ENCODE measurements at regions of chr2 and their contacts with region 1.

Region 1: DNA sequence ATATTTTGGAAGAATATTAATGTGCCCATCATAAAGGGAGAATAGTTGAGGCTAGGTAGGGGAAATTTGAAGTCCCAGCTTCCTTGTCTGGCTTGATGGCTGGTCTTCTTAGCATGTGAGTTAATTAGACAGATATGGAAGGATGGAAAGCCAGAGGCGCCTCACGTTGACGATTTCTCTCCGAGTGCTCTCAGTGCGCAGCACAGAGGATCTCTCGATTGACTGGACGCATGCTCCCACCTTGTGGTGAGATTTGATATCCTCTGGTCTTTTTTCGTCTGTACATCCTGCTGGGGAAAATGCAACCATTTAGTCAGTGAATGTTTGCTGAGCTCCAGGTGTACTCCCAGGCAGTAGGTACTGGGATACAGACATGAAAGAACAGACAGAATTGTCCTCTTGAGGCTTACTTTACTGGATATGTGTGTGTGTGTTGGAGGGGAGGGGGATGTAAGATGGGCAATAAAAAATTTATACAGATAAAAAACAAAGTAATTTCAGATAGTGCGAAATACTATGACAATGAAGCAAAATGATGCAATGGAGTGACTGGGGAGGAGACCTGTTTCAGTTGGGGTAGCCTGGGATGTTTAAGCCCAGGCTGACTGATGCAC is 66.9 kb upstream of the ZNG1B start:
- H3K4me3 Mint-ChIP-seq: no peak overlapping the region
- H3K27ac Mint-ChIP-seq: no peak overlapping the region
- H3K4me1 Mint-ChIP-seq: peaks cover 55% of the 10 kb centered on the region
- H3K27me3 Mint-ChIP-seq: no peaks in the 10 kb centered on the region

Region 2: DNA sequence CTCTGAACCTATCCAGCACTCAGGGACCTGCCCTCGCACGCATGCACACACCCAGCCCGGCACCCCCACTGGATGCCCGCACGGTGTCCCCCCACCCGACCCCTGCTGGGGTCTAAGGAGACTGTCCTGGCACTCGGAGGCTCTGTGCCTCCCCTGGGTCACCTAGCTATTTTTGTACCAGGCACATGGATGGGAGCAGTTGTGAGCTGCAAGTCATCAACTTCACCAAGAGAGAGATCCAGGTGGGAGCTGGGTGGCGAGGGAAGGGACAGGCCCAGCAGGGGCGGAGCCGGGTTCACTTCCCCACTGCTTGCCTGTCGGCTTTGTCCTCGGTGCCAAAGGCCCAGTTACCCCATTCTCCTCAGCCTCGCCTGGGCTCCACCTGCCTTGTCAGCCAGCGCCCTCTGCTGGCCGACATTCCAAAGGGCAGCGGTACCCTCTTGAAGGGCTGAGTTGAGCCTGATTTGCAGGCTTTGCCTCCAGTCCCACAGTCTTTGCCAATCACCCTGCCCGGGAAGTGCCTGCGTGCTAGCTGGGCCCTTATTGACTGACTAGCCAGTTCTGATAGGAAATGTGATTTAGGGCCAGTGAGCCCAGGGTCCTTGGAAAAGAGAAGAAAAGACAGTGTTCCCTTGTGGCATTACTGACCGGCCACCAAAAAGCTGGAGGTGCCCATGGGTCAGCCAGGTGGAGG is 643.9 kb before region 1 on chr2:
- intact Hi-C with region 1: no loop called
- H3K4me3 Mint-ChIP-seq: no peak overlapping the region
- H3K27ac Mint-ChIP-seq: no peak overlapping the region
- H3K4me1 Mint-ChIP-seq: peaks cover 71% of the 10 kb centered on the region
- H3K27me3 Mint-ChIP-seq: no peaks in the 10 kb centered on the region

Region 3: DNA sequence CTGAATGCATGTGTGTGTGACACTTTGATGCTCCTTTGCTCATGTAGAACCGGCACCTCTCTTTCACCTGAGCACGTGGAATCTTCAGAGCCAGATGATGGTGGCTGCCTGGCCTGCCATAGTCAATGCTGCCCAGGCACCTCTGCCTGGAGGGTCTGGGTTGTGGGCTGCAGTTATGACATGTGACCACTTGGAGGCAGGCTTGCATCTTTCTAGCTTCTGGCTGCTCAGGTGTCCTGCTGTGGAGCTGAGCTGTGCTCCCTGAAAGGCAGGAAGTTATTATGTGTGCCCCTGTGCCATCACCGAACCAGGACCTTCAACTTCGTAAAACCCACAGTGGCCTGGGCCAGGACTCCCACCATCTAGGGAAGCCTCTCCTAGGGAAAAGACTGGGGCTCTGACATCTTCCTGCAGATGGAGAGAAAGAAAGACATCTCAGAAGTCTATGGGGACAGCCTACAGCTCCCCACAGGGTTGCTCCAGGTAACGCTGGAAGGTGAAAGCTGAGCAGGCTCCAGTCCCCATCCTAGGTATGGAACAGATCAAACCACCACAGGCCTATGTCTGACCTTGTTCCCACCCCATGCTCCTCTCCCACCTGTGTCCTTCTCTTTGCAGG is 166.6 kb before region 1 on chr2:
- intact Hi-C with region 1: loop called (anchors 5 kb)
- H3K4me3 Mint-ChIP-seq: no peak overlapping the region
- H3K27ac Mint-ChIP-seq: no peak overlapping the region
- H3K4me1 Mint-ChIP-seq: peaks cover 30% of the 10 kb centered on the region
- H3K27me3 Mint-ChIP-seq: peaks cover 2% of the 10 kb centered on the region

Region 4: DNA sequence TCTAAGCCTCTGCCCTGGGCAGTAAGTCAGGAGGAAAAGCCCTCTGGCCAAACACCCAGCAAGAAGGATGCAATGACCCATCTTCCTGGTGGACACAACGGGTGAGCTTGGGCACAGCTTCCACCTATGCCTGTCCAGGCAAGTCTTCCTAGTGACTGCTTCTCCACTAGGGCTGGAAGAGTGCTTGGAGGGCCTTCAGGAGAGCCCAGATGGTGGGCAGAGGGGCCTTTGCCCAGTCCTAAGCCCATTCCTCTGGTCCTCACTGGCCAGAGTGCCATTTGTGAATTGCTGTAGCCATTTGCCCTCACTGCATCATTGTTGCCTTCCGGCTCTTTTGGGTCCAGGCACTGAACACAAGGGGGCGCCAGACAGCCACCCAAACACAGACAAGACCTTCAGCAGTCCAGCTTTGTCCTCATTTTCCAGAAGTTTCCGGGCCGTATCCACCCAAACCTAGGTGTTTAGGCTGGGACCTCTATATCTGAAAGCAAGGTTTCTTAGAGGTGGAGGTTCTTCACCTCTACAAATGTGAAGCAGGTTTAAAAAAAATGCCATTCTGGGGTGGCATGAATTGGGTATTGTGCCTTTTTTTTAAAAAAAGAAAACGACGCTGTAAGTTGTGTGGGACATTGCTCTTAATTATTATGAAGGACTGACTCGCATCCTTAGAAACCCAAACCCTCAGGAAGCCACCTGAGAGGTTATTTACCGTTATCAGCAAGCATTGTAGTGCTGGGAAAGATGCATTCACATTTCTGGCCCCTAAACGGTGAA is 121.4 kb before region 1 on chr2:
- intact Hi-C with region 1: loop called (anchors 2 kb)
- H3K4me3 Mint-ChIP-seq: no peak overlapping the region
- H3K27ac Mint-ChIP-seq: no peak overlapping the region
- H3K4me1 Mint-ChIP-seq: peaks cover 30% of the 10 kb centered on the region
- H3K27me3 Mint-ChIP-seq: no peaks in the 10 kb centered on the region

Region 5: DNA sequence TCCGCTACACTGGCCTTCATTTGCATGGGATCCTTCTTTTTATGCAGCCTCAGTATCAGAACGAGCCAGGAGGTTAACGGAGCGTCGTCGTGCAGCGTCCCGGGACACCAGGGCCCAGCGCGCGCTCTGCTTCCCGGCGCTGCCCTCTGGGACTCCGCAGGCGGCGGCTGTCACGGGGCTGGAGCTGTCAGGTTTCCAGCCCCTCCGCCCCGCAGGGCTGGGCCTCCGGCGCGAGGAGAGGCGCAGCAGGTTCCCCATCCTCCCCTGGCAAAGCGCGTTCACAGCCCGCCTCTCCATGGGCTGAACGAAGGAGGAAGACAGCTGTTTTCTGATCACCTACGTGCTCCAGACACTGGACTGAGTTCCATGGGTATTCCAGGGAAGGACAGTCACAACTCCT is 79.4 kb before region 1 on chr2:
- intact Hi-C with region 1: loop called (anchors 1 kb)
- H3K4me3 Mint-ChIP-seq: no peak overlapping the region
- H3K27ac Mint-ChIP-seq: no peak overlapping the region
- H3K4me1 Mint-ChIP-seq: no peaks in the 10 kb centered on the region
- H3K27me3 Mint-ChIP-seq: peaks cover 46% of the 10 kb centered on the region